ENCODE measurements at regions of chr5 and their contacts with region 1.

Region 1: DNA sequence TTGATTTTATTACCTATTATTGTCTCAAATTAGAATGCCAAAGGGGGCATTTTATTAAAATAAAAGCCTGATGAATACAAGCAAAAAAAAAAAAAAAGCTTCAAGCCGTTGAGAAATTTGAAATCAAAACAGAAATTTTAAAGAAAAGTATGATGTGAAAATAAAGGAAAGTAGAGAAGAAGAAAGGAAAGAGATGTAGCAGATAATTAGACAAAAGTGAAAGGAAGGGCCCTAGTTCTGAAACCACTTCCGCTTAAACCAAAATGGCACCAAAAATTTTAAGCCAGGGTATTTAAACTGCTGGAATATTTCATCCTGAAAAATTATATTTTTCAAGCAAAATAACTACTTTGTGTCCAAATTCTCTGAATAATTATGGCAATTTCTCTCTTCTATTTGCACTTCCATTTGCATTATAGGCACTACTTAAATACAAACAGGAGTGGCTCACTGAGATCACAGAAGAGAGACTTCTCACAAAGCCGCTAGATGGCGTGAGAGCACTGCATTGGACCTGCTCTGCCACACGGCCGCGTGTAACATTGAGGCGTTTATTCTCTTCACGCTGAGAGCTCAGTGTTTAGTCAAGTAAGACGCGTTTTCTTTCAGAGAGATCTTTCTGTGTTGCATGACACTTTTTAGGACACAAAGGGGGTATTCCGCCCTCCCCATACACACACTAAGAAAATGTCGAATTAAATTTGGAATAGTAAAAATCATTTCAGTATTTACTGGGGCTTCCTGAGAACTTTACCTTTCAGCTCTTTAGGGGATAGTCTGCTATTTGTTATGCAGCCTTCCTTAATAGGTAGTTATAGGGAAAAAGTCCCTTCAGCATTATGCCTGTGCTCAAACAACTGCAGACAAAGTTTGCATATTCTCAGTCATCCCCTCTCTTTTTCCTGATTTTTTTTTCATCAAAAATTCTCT is 368.4 kb upstream of the CCNH start:
- DNase-seq: peak; percentile 41 to 49
- ATAC-seq: peak; percentile 91 to 99
- H3K4me3 ChIP-seq: no peak overlapping the region
- H3K27ac ChIP-seq: no peak overlapping the region
- H3K4me1 ChIP-seq: no peaks in the 10 kb centered on the region
- H3K27me3 ChIP-seq: peaks cover 0 to 23% (median 0%) of the 10 kb centered on the region in 3 donors
- CTCF ChIP-seq: peak; percentile 70 to 94 (median 80)
- POLR2A ChIP-seq: no peak

Region 2: DNA sequence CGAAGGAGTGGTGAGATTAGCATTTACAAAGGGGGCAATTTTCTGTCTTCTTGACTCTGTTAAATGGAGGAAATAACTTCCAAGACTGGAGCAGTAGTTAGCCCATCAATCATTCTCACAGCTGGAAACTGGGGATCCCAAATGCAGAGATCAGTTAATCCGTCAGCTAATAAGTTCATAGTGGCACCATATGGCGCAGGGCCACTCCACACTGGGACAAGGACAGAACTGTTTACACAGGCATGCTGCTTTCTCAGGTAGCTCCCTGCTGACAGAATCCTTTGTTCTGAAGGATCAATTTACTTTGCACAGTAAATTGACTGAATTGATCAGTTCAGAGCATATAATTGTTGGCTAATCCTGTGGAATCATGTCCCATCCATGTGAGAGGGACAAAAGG is 91.9 kb after region 1 on chr5:
- in situ Hi-C with region 1: no loop called
- intact Hi-C with region 1: no loop called
- DNase-seq: no peak
- ATAC-seq: no peak
- H3K4me3 ChIP-seq: no peak overlapping the region
- H3K27ac ChIP-seq: no peak overlapping the region
- H3K4me1 ChIP-seq: no peaks in the 10 kb centered on the region
- H3K27me3 ChIP-seq: no peaks in the 10 kb centered on the region
- CTCF ChIP-seq: no peak
- POLR2A ChIP-seq: no peak

Region 3: DNA sequence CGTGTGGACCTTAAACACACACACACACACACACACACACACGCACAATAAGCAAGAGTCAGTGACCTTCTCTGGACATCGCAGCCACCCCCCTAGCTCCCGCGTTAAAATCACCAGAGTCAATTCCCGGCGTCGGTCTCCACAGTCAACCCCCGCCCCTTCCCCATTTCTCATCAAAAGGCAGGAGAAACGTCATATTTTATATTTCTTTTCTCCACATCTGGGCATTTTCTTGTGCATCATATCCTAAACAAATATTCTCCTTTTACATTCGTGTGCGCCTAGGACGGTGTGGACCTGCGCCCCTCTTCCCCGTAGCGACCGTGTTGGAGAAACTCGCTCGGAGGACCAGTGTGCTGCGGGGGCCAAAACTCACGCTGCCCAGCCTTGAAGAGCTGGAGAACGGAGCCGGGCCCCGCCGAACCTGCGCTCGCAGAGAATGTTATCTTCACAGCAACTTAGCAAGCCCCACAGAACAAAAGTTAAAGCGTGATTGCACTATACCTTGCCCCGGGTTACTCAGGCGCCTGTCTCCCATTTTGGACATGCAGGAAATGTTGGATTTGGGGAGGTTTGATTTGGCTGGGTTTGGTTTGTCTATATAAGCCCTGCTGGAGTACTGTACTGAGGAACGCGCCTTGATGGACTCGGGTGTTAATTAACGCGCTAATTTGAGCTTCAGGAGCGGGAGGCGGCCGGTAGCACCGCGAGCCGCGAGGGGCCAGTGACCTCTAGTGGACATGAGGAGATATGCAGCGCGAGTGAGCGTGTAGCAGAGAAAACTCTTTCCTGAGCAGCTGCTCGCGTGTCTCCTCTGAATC is 909.5 kb after region 1 on chr5:
- in situ Hi-C with region 1: loop called in 3 of 4 experiments (anchors 10 kb)
- intact Hi-C with region 1: loop called (anchors 1 kb)
- DNase-seq: peak; percentile 38 to 52
- ATAC-seq: peak; percentile 79 to 89
- H3K4me3 ChIP-seq: peak overlapping the region; percentile 14 to 43 (median 32)
- H3K27ac ChIP-seq: no peak overlapping the region
- H3K4me1 ChIP-seq: peaks cover 20% of the 10 kb centered on the region in 2 donors
- H3K27me3 ChIP-seq: peaks cover 98 to 100% (median 100%) of the 10 kb centered on the region in 3 donors
- CTCF ChIP-seq: peak; percentile 67 to 95 (median 87)
- POLR2A ChIP-seq: no peak